Caco-2 (cell line): ENCODE measurements at regions of chr16 and their contacts with region 1.

Region 1: GRCh38 chr16:67514382-67514828 is 14.2 kb upstream of the RIPOR1 start:
- DNase-seq: peak; percentile 84 to 87
- H3K4me3 ChIP-seq: no peak overlapping the region
- H3K4me3 Mint-ChIP-seq: no peak overlapping the region
- H3K27ac Mint-ChIP-seq: peak overlapping the region; percentile 34
- H3K4me1 ChIP-seq: no peaks in the 10 kb centered on the region
- H3K4me1 Mint-ChIP-seq: peaks cover 6% of the 10 kb centered on the region
- H3K27me3 ChIP-seq: no peaks in the 10 kb centered on the region
- H3K27me3 Mint-ChIP-seq: no peaks in the 10 kb centered on the region
- CTCF ChIP-seq: peak; percentile 79 to 90

Region 2: GRCh38 chr16:67447508-67448076 is 66.8 kb before region 1 on chr16:
- CTCF ChIA-PET with region 1: no interaction called
- POLR2A ChIA-PET with region 1: no interaction called
- intact Hi-C with region 1: no loop called
- DNase-seq: peak; percentile 70 to 74
- H3K4me3 ChIP-seq: no peak overlapping the region
- H3K4me3 Mint-ChIP-seq: no peak overlapping the region
- H3K27ac Mint-ChIP-seq: no peak overlapping the region
- H3K4me1 ChIP-seq: no peaks in the 10 kb centered on the region
- H3K4me1 Mint-ChIP-seq: no peaks in the 10 kb centered on the region
- H3K27me3 ChIP-seq: no peaks in the 10 kb centered on the region
- H3K27me3 Mint-ChIP-seq: no peaks in the 10 kb centered on the region
- CTCF ChIP-seq: peak; percentile 64 to 69

Region 3: DNA sequence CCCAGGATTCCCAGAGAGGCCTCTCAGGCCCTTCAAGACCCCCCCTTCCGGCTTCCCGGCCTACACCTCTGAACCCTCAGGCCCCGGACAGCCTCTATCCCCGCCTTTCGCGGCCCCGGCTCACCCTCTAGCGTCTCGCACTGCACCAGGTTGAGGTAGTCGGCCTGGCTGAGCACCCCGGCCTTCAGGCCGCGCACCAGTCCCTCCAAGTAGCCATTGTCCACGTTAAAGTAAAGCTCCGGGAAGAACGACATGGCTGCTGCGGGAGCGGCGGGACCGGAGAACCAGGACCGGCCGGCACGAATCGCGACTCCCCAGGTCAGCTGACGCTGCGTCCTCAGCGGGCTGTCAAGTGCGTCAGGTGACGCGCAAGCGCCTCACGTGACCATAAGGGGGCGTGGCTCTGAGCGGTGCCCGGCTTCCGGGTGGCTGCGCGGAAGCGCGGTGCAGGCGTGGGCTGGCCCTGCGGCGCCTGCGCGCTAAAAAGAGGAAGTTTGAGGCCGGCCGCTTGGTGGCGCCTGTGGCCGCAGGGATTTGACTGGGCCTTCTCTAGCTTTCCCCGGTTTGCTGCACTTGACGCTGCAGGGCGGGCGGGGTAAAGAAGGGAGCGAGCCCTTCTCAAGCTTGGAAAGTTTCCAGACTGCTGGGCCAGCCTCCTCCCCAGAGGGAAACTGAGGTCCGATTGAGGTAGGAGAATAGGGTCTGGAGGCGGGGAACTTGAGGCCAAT is 33.4 kb before region 1 on chr16 and contains the start of gene ATP6V0D1:
- CTCF ChIA-PET with region 1: interaction called, 49 read pairs
- POLR2A ChIA-PET with region 1: interaction called, 4 read pairs
- intact Hi-C with region 1: loop called (anchors 1 kb)
- DNase-seq: peak; percentile 98 to 100
- H3K4me3 ChIP-seq: peak within 1 kb of the TSS; percentile 94
- H3K4me3 Mint-ChIP-seq: peak within 1 kb of the TSS; percentile 98
- H3K27ac Mint-ChIP-seq: peak within 1 kb of the TSS; percentile 94
- H3K4me1 ChIP-seq: peaks cover 15% of the 10 kb centered on the region
- H3K4me1 Mint-ChIP-seq: peaks cover 19% of the 10 kb centered on the region
- H3K27me3 ChIP-seq: no peaks in the 10 kb centered on the region
- H3K27me3 Mint-ChIP-seq: no peaks in the 10 kb centered on the region
- CTCF ChIP-seq: peak; percentile 89 to 96
- total RNA-seq, gene ATP6V0D1: 107 and 110 TPM in 2 replicates

Region 4: DNA sequence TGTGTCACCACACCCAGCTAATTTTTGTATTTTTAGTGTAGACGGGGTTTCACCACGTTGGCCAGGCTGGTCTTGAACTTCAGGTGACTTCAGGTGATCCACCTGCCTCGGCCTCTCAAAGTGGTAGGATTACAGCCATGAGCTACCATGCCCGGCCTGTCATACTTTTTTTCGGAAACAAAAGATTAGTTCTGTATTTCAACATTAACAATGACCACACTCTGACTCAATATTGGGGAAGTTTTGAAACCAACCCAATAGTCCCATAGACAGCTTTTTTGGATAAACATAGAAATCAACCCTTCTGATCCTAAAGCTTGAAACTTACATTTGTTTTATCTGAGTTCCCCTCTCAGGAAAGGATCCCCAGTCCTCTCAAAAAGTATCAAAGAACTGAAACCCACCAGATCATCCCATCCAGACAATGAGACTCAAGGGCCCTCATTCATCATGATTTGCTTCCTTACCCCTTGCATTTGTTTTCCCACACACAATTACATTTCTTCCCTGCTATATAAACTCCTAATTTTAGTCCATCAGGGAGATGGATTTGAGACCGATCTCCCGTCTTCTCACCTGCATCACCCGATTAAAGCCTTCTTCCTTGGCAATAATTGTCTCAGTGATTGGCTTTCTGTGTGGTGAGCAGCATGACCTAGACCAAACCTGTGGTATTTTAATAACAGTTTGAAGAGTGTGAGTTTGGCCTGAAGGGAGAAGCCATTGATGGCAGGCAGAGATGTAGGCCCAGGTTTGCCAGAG is 23.9 kb before region 1 on chr16:
- CTCF ChIA-PET with region 1: interaction called, 27 read pairs
- POLR2A ChIA-PET with region 1: no interaction called
- intact Hi-C with region 1: loop called (anchors 1 kb)
- DNase-seq: no peak
- H3K4me3 ChIP-seq: no peak overlapping the region
- H3K4me3 Mint-ChIP-seq: no peak overlapping the region
- H3K27ac Mint-ChIP-seq: no peak overlapping the region
- H3K4me1 ChIP-seq: peaks cover 22% of the 10 kb centered on the region
- H3K4me1 Mint-ChIP-seq: peaks cover 23% of the 10 kb centered on the region
- H3K27me3 ChIP-seq: no peaks in the 10 kb centered on the region
- H3K27me3 Mint-ChIP-seq: no peaks in the 10 kb centered on the region
- CTCF ChIP-seq: no peak

Region 5: GRCh38 chr16:67499106-67499505 is 15.3 kb before region 1 on chr16:
- CTCF ChIA-PET with region 1: interaction called, 19 read pairs
- POLR2A ChIA-PET with region 1: no interaction called
- intact Hi-C with region 1: loop called (anchors 1 kb)
- DNase-seq: no peak
- H3K4me3 ChIP-seq: no peak overlapping the region
- H3K4me3 Mint-ChIP-seq: no peak overlapping the region
- H3K27ac Mint-ChIP-seq: no peak overlapping the region
- H3K4me1 ChIP-seq: no peaks in the 10 kb centered on the region
- H3K4me1 Mint-ChIP-seq: no peaks in the 10 kb centered on the region
- H3K27me3 ChIP-seq: no peaks in the 10 kb centered on the region
- H3K27me3 Mint-ChIP-seq: no peaks in the 10 kb centered on the region
- CTCF ChIP-seq: no peak